Posterior vena cava (tissue), 2 donors: ENCODE measurements at regions of chr1 and their contacts with region 1.

Region 1: GRCh38 chr1:62794053-62794452 is 10.1 kb downstream of the ATG4C start:
- DNase-seq: no peak

Region 2: DNA sequence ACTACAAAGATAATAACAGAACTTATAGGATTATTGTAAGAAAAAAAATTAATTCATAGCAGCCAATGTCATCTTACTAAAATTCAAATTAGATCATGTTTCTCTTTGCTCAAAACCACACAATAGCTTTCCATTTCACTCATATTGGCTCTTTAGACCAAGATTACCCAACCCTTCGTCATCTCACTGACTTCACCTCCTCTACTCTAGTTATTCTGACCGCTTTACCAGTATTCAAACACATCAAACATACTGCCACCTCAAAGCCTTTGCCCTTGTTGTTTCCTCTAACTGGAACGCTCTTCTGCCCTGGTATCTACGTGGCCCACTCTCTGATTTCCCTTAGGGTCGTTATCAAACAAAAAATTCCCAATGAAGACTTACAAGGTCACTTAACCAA is 195.0 kb before region 1 on chr1:
- intact Hi-C with region 1: no loop called
- DNase-seq: no peak

Region 3: GRCh38 chr1:62823556-62823955 is 29.5 kb after region 1 on chr1:
- intact Hi-C with region 1: no loop called
- DNase-seq: no peak

Region 4: DNA sequence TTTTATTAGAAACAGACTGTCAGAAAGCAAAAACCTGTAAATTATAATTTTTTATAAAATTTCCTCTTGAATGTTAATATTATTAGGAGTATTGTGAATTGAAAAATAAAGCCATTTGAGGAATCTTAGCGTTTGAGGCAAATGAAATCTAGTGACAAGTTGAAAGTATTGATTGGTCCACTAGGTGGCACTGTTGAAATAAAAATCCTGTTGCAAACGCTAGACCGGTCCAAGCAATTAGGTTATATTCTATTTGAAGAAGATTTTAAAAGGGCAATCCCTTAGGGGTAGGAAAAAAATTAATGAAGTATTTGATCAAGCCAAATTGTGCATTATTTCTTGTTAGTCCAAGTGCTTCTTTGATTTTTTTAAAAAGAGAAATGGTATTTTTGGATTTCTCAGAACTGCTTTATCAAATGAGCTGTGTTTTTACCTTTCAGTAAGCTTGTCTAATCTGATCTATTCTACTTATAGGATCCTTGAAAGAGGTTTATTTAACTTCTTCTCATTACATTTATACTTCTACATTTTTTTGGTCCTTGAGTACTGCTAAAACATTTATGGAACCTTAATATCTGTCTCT is 47.6 kb after region 1 on chr1:
- intact Hi-C with region 1: loop called in 1 of 2 experiments (anchors 2 kb)
- DNase-seq: no peak

Region 5: GRCh38 chr1:62882201-62883104 is 88.4 kb after region 1 on chr1:
- intact Hi-C with region 1: no loop called
- DNase-seq: no peak

Region 6: GRCh38 chr1:63082773-63083172 is 288.7 kb after region 1 on chr1:
- intact Hi-C with region 1: no loop called
- DNase-seq: no peak